K562 (cell line): ENCODE measurements at regions of chr1 and their contacts with region 1.

Region 1: DNA sequence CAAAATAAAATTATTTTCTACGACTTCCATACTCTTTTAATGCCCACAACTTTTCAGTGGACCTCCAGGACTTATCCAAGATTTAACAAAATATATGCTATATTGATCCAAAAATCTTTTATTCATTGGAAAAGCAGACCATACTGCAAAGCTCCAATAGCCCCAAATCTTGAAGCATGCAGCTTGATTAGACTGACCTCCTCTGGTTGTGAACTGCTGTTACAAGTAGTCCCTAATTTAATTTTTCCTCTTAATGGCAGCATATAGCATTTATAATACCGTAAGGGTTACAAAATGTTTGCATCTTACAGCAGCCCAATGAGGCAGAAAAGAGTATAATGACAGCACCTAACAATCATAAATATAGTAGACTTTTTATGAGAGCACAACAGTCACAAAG is 49.8 kb downstream of the TPR start:
- DNase-seq: peak in 3 of 4 experiments; percentile 24 to 33 (median 31)
- ATAC-seq: peak; percentile 79
- H3K4me3 ChIP-seq: no peak overlapping the region
- H3K27ac ChIP-seq: no peak overlapping the region
- H3K4me1 ChIP-seq: no peaks in the 10 kb centered on the region
- H3K27me3 ChIP-seq: no peaks in the 10 kb centered on the region
- CTCF ChIP-seq: peak; percentile 39 to 64 (median 52); a peak in 4 of 6 replicates
- EP300 ChIP-seq: no peak
- POLR2A ChIP-seq: no peak
- RAD21 ChIP-seq: no peak; a peak in 2 of 4 replicates

Region 2: DNA sequence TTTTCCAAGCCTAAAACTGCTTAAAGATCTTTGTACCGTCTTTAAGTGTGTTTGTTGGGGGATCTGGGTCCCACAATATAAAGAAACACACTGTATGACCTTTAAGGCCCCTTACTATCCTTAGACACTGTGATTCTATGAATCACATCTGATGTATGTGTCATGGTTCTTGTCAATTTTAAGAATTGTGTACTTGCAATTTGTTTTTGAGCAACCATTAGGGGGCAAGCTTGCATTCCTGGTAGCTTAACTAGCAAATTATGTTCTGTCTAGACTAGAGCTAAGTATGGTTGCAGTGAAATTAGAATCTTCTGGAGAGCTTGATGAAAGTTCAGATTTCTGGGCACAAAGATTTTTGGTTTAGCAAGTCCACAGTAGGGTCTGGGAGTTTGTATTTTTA is 169.6 kb before region 1 on chr1:
- CTCF ChIA-PET with region 1: no interaction called
- POLR2A ChIA-PET with region 1: no interaction called
- in situ Hi-C with region 1: no loop called
- intact Hi-C with region 1: loop called (anchors 10 kb)
- DNase-seq: peak in 2 of 4 experiments; percentile 30 to 60
- ATAC-seq: peak; percentile 88
- H3K4me3 ChIP-seq: no peak overlapping the region
- H3K27ac ChIP-seq: no peak overlapping the region
- H3K4me1 ChIP-seq: no peaks in the 10 kb centered on the region
- H3K27me3 ChIP-seq: no peaks in the 10 kb centered on the region
- CTCF ChIP-seq: peak; percentile 59 to 80 (median 65); a peak in 5 of 6 replicates
- EP300 ChIP-seq: no peak
- POLR2A ChIP-seq: no peak
- RAD21 ChIP-seq: peak; percentile 89 to 95

Region 3: DNA sequence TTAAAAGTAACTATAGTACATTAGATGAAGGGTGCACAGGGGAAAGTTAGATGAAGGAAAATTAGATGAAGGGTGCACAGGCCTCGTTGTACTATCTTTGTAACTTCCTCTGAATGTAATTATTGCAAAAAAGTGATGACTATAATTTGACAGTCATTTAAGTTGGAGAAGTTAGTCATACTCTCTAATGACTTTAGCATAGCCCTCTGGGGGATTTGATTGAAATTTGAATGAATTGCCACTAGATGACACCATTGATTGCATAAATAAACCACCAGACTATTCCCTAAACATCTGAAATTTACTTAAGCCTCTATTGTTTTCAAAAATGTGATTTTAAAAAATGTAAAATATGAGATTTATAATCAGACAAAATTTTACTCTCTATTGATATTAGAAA is 52.8 kb before region 1 on chr1:
- CTCF ChIA-PET with region 1: no interaction called
- POLR2A ChIA-PET with region 1: no interaction called
- in situ Hi-C with region 1: no loop called
- intact Hi-C with region 1: loop called (anchors 1 kb)
- DNase-seq: no peak
- ATAC-seq: peak; percentile 36; the same call in 1 of the 3 replicates
- H3K4me3 ChIP-seq: no peak overlapping the region
- H3K27ac ChIP-seq: no peak overlapping the region
- H3K4me1 ChIP-seq: no peaks in the 10 kb centered on the region
- H3K27me3 ChIP-seq: no peaks in the 10 kb centered on the region
- CTCF ChIP-seq: peak in 1 of 3 experiments; percentile 52; a peak in 2 of 6 replicates
- EP300 ChIP-seq: no peak
- POLR2A ChIP-seq: no peak
- RAD21 ChIP-seq: peak in 1 of 2 experiments; percentile 48; a peak in 2 of 4 replicates

Region 4: DNA sequence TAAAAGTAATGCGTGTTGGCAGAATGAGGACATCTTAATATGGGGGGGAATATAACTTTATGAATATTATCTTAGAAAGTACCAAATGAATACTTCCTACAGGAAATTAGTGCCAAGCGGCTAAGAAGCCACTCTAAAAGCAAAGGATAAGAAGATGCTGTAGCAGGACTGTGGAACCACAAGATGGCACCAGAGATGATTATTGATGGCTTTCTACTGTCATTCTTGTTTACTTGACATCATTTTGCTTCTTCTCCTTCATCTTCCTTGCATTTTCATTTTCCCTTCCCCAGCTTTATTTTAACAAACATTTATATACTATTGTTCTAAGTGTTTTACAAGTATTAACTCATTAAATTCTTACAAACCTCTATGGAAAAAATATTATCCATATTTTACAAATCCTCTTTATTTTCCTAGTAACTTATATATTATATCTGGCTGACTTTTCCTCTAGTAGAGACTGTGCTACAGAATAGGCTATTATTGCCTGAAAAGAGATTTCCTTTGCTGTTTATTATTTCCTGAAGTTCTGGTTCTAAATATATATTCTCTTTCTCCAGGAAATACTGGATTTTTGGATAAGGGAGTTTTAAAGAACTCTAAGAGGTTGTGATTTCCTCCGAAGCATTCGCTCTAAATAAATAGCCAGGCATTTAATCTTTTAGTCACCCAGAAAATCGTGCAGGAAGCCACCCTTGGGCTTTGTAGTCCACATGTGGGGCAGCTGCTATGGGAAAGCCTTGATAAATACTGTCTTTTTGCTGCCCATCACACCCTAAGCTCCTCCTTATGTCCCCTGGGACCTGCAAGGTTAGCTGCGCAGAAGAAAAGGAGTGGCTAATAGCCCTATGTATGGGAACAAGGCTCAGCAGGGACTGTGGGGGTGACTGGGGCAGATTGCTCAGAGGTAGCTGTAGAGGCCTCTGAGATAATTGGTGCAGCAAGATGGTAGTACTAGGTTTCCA is 20.0 kb before region 1 on chr1:
- CTCF ChIA-PET with region 1: no interaction called
- POLR2A ChIA-PET with region 1: interaction called, 13 read pairs
- in situ Hi-C with region 1: no loop called
- intact Hi-C with region 1: no loop called
- DNase-seq: peak; percentile 43 to 55 (median 52)
- ATAC-seq: peak; percentile 83
- H3K4me3 ChIP-seq: no peak overlapping the region
- H3K27ac ChIP-seq: no peak overlapping the region
- H3K4me1 ChIP-seq: no peaks in the 10 kb centered on the region
- H3K27me3 ChIP-seq: peaks cover 5 to 7% of the 10 kb centered on the region in 2 experiments; a peak in 3 of 5 replicates
- CTCF ChIP-seq: peak; percentile 50 to 73 (median 62); a peak in 5 of 6 replicates
- EP300 ChIP-seq: no peak
- POLR2A ChIP-seq: no peak
- RAD21 ChIP-seq: peak; percentile 38 to 69; a peak in 3 of 4 replicates

Region 5: DNA sequence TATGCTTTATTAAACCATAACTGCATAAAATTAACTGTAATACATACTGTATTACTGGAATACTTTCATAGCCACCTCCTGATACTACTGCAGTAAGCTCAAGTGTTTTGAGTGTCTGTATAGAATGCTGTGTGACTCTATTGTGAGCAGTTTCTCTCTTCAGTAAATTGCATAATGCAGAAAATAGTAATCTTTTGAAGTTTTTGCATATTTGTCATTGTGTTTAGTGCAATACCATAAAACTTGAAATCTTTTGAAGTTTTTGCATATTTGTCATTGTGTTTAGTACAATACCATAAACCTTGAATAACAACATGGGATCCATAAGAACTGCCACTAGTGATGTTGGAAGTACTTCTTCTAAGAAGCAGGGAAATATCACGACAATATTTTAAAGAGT is 38.7 kb after region 1 on chr1:
- CTCF ChIA-PET with region 1: no interaction called
- POLR2A ChIA-PET with region 1: no interaction called
- in situ Hi-C with region 1: no loop called
- intact Hi-C with region 1: loop called (anchors 5 kb)
- DNase-seq: no peak
- ATAC-seq: no peak
- H3K4me3 ChIP-seq: no peak overlapping the region
- H3K27ac ChIP-seq: no peak overlapping the region
- H3K4me1 ChIP-seq: no peaks in the 10 kb centered on the region
- H3K27me3 ChIP-seq: no peaks in the 10 kb centered on the region
- CTCF ChIP-seq: no peak
- EP300 ChIP-seq: no peak
- POLR2A ChIP-seq: no peak
- RAD21 ChIP-seq: no peak

Region 6: GRCh38 chr1:186393476-186393875 is 68.2 kb after region 1 on chr1:
- CTCF ChIA-PET with region 1: no interaction called
- POLR2A ChIA-PET with region 1: no interaction called
- in situ Hi-C with region 1: no loop called
- intact Hi-C with region 1: no loop called
- DNase-seq: no peak
- ATAC-seq: no peak
- H3K4me3 ChIP-seq: no peak overlapping the region
- H3K27ac ChIP-seq: no peak overlapping the region
- H3K4me1 ChIP-seq: no peaks in the 10 kb centered on the region
- H3K27me3 ChIP-seq: no peaks in the 10 kb centered on the region
- CTCF ChIP-seq: no peak
- EP300 ChIP-seq: no peak
- POLR2A ChIP-seq: no peak
- RAD21 ChIP-seq: no peak